Endothelial cell of umbilical vein (primary cell): ENCODE measurements at regions of chr17 and their contacts with region 1.

Region 1: GRCh38 chr17:12402963-12403622 is 262.6 kb upstream of the MYOCD start:
- DNase-seq: no peak
- H3K4me3 ChIP-seq: no peak overlapping the region
- H3K27ac ChIP-seq: no peak overlapping the region
- H3K4me1 ChIP-seq: no peaks in the 10 kb centered on the region
- H3K27me3 ChIP-seq: no peaks in the 10 kb centered on the region
- CTCF ChIP-seq: no peak
- POLR2A ChIP-seq: no peak

Region 2: GRCh38 chr17:12330456-12330855 is 72.6 kb before region 1 on chr17:
- CTCF ChIA-PET with region 1: no interaction called
- POLR2A ChIA-PET with region 1: no interaction called
- dilution Hi-C with region 1: no loop called
- intact Hi-C with region 1: loop called (anchors 2 kb)
- DNase-seq: no peak
- H3K4me3 ChIP-seq: no peak overlapping the region
- H3K27ac ChIP-seq: no peak overlapping the region
- H3K4me1 ChIP-seq: no peaks in the 10 kb centered on the region
- H3K27me3 ChIP-seq: no peaks in the 10 kb centered on the region
- CTCF ChIP-seq: no peak
- POLR2A ChIP-seq: no peak

Region 3: GRCh38 chr17:12388226-12388625 is 14.9 kb before region 1 on chr17:
- CTCF ChIA-PET with region 1: no interaction called
- POLR2A ChIA-PET with region 1: no interaction called
- dilution Hi-C with region 1: no loop called
- intact Hi-C with region 1: no loop called
- DNase-seq: no peak
- H3K4me3 ChIP-seq: no peak overlapping the region
- H3K27ac ChIP-seq: no peak overlapping the region
- H3K4me1 ChIP-seq: no peaks in the 10 kb centered on the region
- H3K27me3 ChIP-seq: no peaks in the 10 kb centered on the region
- CTCF ChIP-seq: no peak
- POLR2A ChIP-seq: no peak